ENCODE measurements at regions of chr17 and their contacts with region 1.

Region 1: DNA sequence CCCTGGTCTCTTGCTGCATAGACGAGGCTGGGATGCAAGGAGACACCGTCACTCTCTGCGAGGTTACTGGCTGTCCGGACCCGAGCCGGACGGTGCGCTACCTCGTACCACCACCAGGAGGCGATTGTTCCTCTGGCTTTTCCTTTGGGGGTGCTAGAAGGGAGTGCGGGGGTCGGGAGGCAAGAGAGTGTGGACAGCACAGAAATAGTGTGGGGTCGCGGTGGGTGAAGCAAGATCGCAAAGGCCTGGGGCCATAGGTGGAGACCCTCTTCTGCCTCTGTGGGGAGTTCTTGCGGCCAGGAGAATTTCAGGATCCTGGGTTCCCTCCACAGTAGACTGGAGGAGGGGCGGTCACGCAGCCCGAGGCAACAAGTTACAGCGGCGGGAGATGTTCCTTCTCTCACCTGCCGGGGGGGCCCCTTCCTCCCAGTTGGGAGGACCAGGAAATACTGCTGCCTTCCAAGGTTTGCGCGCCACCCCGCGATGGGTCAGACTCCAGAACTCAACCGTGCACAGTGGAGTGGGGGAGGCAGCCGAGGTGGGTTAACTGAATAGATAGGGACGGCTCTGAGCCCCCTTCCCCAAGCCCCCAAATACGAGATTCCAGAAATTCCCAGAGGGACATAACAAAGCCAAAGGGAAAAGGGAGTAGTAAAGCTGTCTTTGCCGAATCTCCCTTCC is 6.9 kb downstream of the PHOSPHO1 start:
- DNase-seq: peak; percentile 52 to 87
- ATAC-seq: peak; percentile 36 to 77; a peak in 4 of 6 replicates
- H3K4me3 ChIP-seq: 0 out of 3 replicates have a peak overlapping the region, but pooled peaks have one; percentile 0
- H3K27ac ChIP-seq: 0 out of 6 replicates have a peak overlapping the region, but pooled peaks of 1 of the 2 experiments have one; percentile 10
- H3K4me1 ChIP-seq: peaks cover 11% of the 10 kb centered on the region
- CTCF ChIP-seq: peak; percentile 74
- EP300 ChIP-seq: no peak
- POLR2A ChIP-seq: no peak
- RAD21 ChIP-seq: peak; percentile 51 to 56

Region 2: DNA sequence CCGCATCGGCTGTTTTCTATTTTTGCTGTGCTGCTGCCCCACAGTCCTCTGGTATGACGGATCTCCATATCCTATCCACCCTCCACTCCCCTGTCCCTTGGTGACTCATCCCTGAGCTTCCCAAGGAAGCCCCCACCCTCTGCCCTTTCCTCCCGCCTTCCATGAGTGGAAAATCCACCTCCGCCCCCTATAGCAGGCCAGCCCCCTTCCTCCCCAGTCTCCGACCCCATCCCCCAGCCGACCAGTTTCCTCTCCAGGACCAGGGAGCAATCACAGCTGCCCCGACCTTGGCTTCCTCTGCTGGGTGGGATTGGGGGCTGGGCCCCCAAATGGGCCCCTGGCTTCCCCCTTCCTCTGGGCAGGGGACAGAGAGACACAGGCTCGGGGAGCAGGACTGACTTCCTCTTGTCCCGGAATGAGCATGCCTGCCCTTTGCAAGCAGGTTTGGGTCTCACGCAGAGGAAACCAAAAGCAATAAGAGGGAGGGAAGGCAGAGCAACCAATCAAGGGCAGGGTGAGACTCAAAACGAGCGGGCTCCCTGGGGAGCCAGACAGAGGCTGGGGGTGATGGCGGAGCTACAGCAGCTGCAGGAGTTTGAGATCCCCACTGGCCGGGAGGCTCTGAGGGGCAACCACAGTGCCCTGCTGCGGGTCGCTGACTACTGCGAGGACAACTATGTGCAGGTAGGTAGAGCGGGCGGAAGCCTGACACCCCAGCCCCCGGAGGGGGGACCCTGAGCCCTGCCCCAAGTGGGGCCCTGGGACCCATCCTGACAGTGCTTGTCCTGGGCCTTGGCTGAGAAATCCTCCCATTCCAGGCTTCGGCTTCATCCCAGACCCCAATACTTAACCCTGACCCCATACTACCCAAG is 13.3 kb before region 1 on chr17 and contains the starts of genes ABI3 and GNGT2:
- CTCF ChIA-PET with region 1: interaction called, 224 read pairs
- POLR2A ChIA-PET with region 1: no interaction called
- DNase-seq: no peak
- ATAC-seq: no peak
- H3K4me3 ChIP-seq: no peak within 1 kb of the TSS
- H3K27ac ChIP-seq: no peak within 1 kb of the TSS
- H3K4me1 ChIP-seq: peaks cover 5% of the 10 kb centered on the region; the same call in 1 of the 3 replicates
- CTCF ChIP-seq: no peak
- EP300 ChIP-seq: no peak
- POLR2A ChIP-seq: no peak
- RAD21 ChIP-seq: no peak
- polyA plus RNA-seq, gene ABI3: not detected in 2 replicates
- polyA plus RNA-seq, gene GNGT2: not detected in 2 replicates

Region 3: GRCh38 chr17:49388692-49389513 is 165.2 kb after region 1 on chr17:
- CTCF ChIA-PET with region 1: no interaction called
- POLR2A ChIA-PET with region 1: no interaction called
- DNase-seq: no peak
- ATAC-seq: no peak
- H3K4me3 ChIP-seq: no peak overlapping the region
- H3K27ac ChIP-seq: no peak overlapping the region
- H3K4me1 ChIP-seq: peaks cover 7% of the 10 kb centered on the region; the same call in 1 of the 3 replicates
- CTCF ChIP-seq: no peak
- EP300 ChIP-seq: no peak
- POLR2A ChIP-seq: no peak
- RAD21 ChIP-seq: no peak